Heart left ventricle (tissue), 16 donors: ENCODE measurements at regions of chr11 and their contacts with region 1.

Region 1: DNA sequence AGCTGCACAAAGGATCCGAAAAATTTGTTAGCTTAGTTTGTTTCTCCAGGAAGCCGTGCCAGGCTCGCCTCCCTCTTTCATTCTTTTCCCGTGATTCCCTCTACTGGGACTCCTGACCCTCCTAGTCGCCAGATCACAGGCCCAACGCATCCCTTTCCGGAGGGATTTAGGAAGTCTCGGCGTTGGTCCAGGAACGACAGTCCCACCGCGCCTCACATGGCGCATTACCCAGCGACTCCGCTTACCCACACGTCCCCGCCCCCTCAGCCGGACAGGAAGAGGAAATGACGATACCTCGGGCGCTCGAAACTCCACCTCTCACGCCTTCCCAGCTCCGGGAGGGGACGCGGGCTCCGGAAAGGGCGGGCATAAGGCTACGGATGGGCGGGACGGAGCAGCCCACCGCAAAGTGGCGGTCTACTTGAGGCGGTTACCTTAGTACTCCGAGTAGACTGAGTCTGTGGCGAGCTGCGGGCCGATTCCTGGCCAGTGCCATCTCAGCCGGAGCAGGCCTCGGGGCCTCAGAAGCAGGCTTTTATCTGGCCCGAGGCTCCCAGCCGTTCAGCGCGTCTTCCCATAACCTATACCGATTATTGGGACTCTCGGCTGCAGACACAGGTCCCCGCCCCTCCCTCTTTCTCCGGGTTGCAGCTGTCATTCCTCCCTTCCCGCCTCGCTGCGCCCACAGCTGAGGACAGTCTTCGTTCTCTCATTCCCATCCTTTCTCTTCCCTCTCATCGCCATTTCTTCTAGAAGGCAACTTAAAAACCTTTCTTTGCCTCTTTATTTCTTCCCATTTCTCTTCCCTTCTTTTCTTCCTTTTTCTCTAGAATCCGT is at the start of gene CCDC15:
- DNase-seq: peak; percentile 98 to 99 (median 98)
- ATAC-seq: peak; percentile 100
- H3K4me3 ChIP-seq: peak within 1 kb of the TSS; percentile 48 to 84 (median 74)
- H3K27ac ChIP-seq: peak within 1 kb of the TSS in 11 of 12 donors; percentile 63 to 90 (median 85)
- H3K4me1 ChIP-seq: peaks cover 0 to 15% (median 8%) of the 10 kb centered on the region in 12 donors
- H3K27me3 ChIP-seq: no peaks in the 10 kb centered on the region
- CTCF ChIP-seq: no peak
- POLR2A ChIP-seq: peak in 1 of 2 donors; percentile 78
- total RNA-seq, gene CCDC15: 0.12 to 1.8 (median 0.19) TPM

Region 2: DNA sequence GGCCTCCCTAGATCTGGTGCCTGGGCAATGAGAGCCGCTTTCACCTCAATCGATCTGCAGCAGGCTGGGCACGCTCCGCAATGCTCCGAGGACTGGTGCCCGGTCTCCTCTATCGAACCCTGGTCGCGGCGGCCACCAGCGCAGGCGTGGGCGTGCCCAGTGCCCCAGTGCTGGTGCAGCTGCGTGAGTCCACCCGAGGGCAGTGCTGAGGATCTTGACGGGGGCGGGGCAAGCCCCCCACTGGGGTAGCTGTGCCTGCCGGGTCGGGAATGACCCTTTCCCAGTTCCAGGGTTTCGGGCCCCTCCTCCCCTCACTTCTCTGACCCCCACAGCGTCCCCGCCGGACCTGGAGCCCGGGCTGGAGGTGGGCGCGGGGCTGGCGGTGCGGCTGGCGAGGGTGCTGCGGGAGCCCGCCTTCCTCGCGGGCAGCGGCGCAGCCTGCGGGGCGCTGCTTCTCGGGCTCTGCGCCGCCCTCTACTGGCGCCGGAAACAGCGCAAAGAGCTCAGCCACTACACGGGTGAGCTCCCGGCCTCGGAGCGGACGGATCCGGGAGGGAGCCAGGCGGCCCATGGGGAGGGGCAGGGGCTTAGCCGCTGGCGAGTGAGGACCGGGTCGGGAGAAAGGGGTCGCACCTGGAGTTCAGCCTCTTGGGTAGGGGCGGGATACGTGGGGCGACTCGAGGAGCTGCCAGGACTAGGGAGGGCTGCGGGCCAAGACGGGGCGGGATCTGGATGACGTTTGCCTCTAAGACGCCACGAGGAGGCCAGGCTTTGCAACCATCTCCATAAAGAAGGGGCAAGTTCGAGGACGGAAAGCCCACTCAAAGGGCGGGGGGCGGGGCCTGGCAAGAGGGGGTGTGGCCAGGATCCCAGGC is 77.8 kb before region 1 on chr11:
- intact Hi-C with region 1: loop called in 7 of 10 experiments (anchors 2 to 10 kb)
- DNase-seq: peak; percentile 89 to 91 (median 89)
- ATAC-seq: peak; percentile 79 to 92 (median 90)
- H3K4me3 ChIP-seq: peak overlapping the region; percentile 1 to 82 (median 60)
- H3K27ac ChIP-seq: peak overlapping the region; percentile 70 to 98 (median 88)
- H3K4me1 ChIP-seq: peaks cover 0 to 31% (median 20%) of the 10 kb centered on the region in 12 donors
- H3K27me3 ChIP-seq: peaks cover 0 to 51% (median 14%) of the 10 kb centered on the region in 9 donors
- CTCF ChIP-seq: peak; percentile 47 to 92 (median 76)
- POLR2A ChIP-seq: no peak

Region 3: DNA sequence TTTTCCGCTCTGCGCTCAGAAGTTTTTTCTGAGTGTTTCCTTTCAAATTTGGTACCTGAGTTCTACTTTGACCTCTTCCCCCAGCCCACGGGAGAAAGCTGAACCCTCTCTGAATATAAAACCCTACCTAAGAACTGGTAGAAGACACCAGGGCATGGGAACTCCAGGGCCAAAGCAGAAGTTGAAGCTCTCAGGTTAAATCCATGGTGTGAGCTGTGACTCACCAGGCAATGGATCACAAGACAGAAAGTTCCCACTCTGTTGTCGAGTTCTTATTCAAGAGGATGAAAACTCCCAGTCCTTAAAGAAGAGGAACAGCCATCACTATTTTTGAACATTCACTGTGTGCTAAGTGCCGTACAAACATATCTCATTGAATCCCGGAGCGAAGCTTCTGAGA is 148.5 kb after region 1 on chr11:
- intact Hi-C with region 1: no loop called
- DNase-seq: no peak
- ATAC-seq: no peak
- H3K4me3 ChIP-seq: no peak overlapping the region
- H3K27ac ChIP-seq: peak overlapping the region in 1 of 12 donors; percentile 73
- H3K4me1 ChIP-seq: peaks cover 0 to 12% (median 0%) of the 10 kb centered on the region in 12 donors
- H3K27me3 ChIP-seq: no peaks in the 10 kb centered on the region
- CTCF ChIP-seq: no peak
- POLR2A ChIP-seq: no peak

Region 4: DNA sequence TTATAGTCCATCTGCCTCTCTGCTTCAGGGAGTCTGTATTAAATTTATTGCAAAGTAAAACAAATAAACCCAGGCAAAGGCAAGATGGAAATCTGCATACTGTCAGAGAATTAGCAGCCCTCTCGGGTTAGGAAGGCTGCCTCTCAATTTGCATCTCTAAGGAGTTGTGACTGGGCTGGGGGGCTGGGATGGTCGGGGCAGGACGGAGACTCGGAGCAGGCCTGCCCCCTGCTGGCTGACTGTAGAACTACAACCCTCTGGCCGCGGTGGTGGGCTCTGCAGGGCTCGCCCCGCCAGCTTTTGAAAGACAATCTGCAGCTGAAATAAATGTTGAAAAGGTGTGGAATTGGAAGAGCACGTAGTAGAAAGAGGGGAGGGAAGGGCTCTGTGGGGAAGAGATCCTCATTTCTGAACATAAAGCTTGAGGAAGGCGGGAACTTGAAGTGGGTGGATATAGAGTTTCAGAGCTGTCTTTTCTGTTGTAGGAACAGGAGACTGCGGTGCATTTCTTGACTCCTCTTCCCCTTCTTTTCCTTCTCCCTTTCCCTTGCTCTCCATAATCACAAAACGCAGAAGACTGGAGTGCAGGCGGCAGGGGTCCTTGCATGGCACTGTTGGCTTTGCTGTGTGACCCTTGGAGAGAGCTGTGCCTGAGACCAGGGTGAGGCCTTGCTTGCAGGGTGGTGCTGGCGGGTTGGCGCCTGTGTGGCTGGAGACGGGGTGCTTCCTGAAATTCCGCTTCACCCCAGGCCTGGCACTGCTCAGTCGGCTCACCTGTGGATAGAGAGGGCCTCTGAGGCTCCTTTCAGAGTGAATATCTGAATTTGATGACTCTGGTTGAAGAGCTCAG is 187.9 kb after region 1 on chr11:
- intact Hi-C with region 1: loop called in 2 of 10 experiments (anchors 10 kb)
- DNase-seq: peak; percentile 30 to 66 (median 52)
- ATAC-seq: peak in 3 of 4 donors; percentile 76 to 83 (median 79)
- H3K4me3 ChIP-seq: no peak overlapping the region
- H3K27ac ChIP-seq: no peak overlapping the region
- H3K4me1 ChIP-seq: peaks cover 0 to 6% (median 0%) of the 10 kb centered on the region in 12 donors
- H3K27me3 ChIP-seq: peaks cover 0 to 26% (median 11%) of the 10 kb centered on the region in 9 donors
- CTCF ChIP-seq: peak; percentile 84 to 98 (median 94)
- POLR2A ChIP-seq: no peak

Region 5: GRCh38 chr11:125164422-125165110 is 210.6 kb after region 1 on chr11 and contains the start of gene PKNOX2:
- intact Hi-C with region 1: no loop called
- DNase-seq: peak; percentile 78 to 91 (median 84)
- ATAC-seq: peak; percentile 23 to 85 (median 82)
- H3K4me3 ChIP-seq: peak within 1 kb of the TSS; percentile 54 to 86 (median 68)
- H3K27ac ChIP-seq: peak within 1 kb of the TSS; percentile 35 to 86 (median 80)
- H3K4me1 ChIP-seq: peaks cover 0 to 47% (median 24%) of the 10 kb centered on the region in 12 donors
- H3K27me3 ChIP-seq: peaks cover 0 to 48% (median 2%) of the 10 kb centered on the region in 9 donors
- CTCF ChIP-seq: peak; percentile 37 to 84 (median 62)
- POLR2A ChIP-seq: peak in 1 of 2 donors; percentile 38
- total RNA-seq, gene PKNOX2: 3.1 to 9.4 (median 5.0) TPM

Region 6: DNA sequence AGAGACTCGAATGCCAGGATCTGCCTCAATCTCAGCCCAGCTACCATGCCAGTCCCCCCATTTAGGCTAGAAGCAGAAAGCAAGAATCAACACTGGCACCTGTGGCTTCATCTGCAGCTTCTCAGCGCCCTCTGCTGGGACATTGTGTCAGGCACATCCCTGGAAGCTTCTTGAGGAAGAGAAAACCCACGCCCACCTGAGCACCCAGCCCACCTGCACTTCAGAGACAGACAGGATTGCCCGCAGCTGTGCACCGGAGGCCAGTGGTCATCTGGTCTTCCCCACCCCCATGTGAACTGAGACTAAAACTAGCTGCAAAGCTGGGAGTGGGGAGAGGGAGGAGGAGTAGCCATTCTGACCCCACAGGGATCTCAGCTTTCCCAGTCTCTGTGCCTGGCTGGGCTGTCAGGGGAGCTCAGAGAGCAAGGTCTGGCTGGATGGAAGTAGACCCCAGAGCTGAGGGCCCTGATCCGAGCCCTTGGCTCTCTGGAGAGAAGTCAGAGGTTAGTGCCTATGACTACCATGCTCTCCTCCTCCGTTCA is 475.3 kb after region 1 on chr11:
- intact Hi-C with region 1: loop called in 1 of 10 experiments (anchors 10 kb)
- DNase-seq: peak; percentile 40 to 76 (median 58)
- ATAC-seq: no peak
- H3K4me3 ChIP-seq: no peak overlapping the region
- H3K27ac ChIP-seq: peak overlapping the region in 1 of 12 donors; percentile 42
- H3K4me1 ChIP-seq: peaks cover 0 to 39% (median 17%) of the 10 kb centered on the region in 12 donors
- H3K27me3 ChIP-seq: no peaks in the 10 kb centered on the region
- CTCF ChIP-seq: peak; percentile 40 to 70 (median 60)
- POLR2A ChIP-seq: no peak

Region 7: GRCh38 chr11:125874556-125875124 is 920.7 kb after region 1 on chr11:
- intact Hi-C with region 1: loop called in 1 of 10 experiments (anchors 10 kb)
- DNase-seq: peak in 4 of 5 donors; percentile 41 to 55 (median 48)
- ATAC-seq: peak in 3 of 4 donors; percentile 91 to 98 (median 93)
- H3K4me3 ChIP-seq: peak overlapping the region in 8 of 12 donors; percentile 12 to 38 (median 28)
- H3K27ac ChIP-seq: no peak overlapping the region
- H3K4me1 ChIP-seq: no peaks in the 10 kb centered on the region
- H3K27me3 ChIP-seq: no peaks in the 10 kb centered on the region
- CTCF ChIP-seq: peak; percentile 60 to 82 (median 72)
- POLR2A ChIP-seq: no peak